ENCODE measurements at regions of chr20 and their contacts with region 1.

Region 1: DNA sequence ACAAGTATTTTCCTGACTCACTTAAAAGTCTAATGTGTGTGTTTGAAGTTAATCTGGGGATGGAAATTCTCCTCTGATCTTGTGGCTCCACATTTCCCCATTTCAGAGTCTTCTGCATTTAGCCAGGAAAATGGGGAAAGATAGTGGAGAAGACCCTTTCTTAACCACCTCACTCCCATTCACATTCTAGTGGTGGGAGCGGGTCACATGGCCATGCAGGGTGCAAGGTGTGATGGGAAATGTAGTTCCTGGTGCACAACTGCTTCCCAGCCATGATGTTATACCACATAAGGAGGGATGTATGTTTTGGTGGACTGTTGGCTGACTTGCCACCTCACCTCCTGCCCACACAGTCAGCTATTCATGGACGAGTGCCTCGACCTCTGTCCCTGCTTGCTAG is 61.8 kb downstream of the BANF2 start:
- DNase-seq: no peak
- ATAC-seq: no peak
- H3K4me3 ChIP-seq: no peak overlapping the region
- H3K27ac ChIP-seq: no peak overlapping the region
- H3K4me1 ChIP-seq: no peaks in the 10 kb centered on the region
- H3K27me3 ChIP-seq: no peaks in the 10 kb centered on the region
- CTCF ChIP-seq: no peak

Region 2: GRCh38 chr20:17699931-17700657 is 61.5 kb before region 1 on chr20 and contains the start of gene BANF2:
- CTCF ChIA-PET with region 1: no interaction called
- POLR2A ChIA-PET with region 1: no interaction called
- in situ Hi-C with region 1: no loop called
- intact Hi-C with region 1: loop called (anchors 10 kb)
- DNase-seq: no peak
- ATAC-seq: no peak
- H3K4me3 ChIP-seq: no peak within 1 kb of the TSS
- H3K27ac ChIP-seq: no peak within 1 kb of the TSS
- H3K4me1 ChIP-seq: no peaks in the 10 kb centered on the region
- H3K27me3 ChIP-seq: no peaks in the 10 kb centered on the region
- CTCF ChIP-seq: no peak
- total RNA-seq, gene BANF2: not detected

Measured in Panc1 (cell line).